Psoas muscle (tissue), 8 donors: ENCODE measurements at regions of chr10 and their contacts with region 1.

Region 1: DNA sequence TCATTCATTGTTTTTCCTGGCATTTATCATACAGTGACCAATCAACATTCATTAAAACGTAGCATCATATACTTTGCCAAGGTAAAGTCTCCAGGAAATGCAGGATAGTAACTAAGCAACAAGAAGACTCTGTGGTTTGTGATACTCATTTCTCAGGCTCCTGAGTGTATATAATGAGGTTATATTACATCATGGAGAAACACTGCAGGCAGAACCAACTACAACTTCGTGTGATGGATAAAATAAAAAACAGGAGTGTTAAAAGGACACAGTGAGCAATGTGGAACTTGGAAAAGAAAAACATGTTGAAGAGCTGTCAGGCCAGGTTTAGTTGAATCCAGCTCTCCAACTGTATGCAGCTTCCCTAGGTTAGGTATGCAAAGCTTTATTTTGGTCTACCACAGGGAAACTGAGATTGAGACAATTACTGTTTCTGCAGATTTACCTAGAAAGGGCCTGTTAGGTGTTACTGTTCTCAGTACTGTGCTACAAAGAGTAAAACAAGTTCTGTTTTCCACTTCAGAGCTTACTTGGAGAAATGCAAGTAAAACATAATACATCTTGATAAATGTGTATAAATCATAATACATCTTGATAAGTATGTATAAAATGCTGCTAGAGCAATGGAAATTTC is 7.8 kb upstream of the CCNY start:
- DNase-seq: no peak
- ATAC-seq: no peak
- H3K4me3 ChIP-seq: no peak overlapping the region
- H3K27ac ChIP-seq: no peak overlapping the region
- H3K4me1 ChIP-seq: peaks cover 47% of the 10 kb centered on the region
- H3K27me3 ChIP-seq: no peaks in the 10 kb centered on the region
- CTCF ChIP-seq: no peak

Region 2: DNA sequence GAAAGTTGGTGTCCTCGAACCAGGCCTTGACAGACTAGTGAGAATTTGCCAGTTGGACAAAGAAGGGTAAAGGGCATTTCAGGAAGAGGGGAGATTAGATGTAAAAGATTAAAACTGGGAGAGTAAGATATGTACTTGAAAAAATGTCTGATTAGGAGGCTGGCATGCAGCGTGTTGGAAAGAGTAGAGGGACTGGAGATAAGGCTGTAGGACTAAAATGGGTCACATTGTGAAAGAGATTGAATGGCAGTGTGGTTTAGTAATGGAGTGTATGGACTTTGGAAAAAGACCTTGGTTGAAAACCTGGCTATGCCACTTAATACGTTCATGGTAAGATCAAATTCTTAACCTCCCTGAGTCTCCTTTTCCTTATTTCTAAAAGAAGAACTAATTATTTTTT is 187.8 kb before region 1 on chr10:
- intact Hi-C with region 1: no loop called
- DNase-seq: no peak
- ATAC-seq: peak in 2 of 4 donors; percentile 39 to 47
- H3K4me3 ChIP-seq: no peak overlapping the region
- H3K27ac ChIP-seq: no peak overlapping the region
- H3K4me1 ChIP-seq: peaks cover 8% of the 10 kb centered on the region
- H3K27me3 ChIP-seq: no peaks in the 10 kb centered on the region
- CTCF ChIP-seq: no peak

Region 3: GRCh38 chr10:35246770-35247343 is 81.7 kb before region 1 on chr10:
- intact Hi-C with region 1: loop called in 1 of 2 experiments (anchors 10 kb)
- DNase-seq: no peak
- ATAC-seq: no peak
- H3K4me3 ChIP-seq: no peak overlapping the region
- H3K27ac ChIP-seq: no peak overlapping the region
- H3K4me1 ChIP-seq: no peaks in the 10 kb centered on the region
- H3K27me3 ChIP-seq: no peaks in the 10 kb centered on the region
- CTCF ChIP-seq: no peak

Region 4: GRCh38 chr10:35462491-35462934 is 134.0 kb after region 1 on chr10:
- intact Hi-C with region 1: no loop called
- DNase-seq: no peak
- ATAC-seq: peak; percentile 50 to 62 (median 53)
- H3K4me3 ChIP-seq: no peak overlapping the region
- H3K27ac ChIP-seq: peak overlapping the region; percentile 27
- H3K4me1 ChIP-seq: peaks cover 79% of the 10 kb centered on the region
- H3K27me3 ChIP-seq: no peaks in the 10 kb centered on the region
- CTCF ChIP-seq: no peak